Activated T-helper 2 cell treated with anti-CD3 and anti-CD28 coated beads, Interferon-gamma antibody, Interleukin-2, Interleukin-4, amounts not matched to agents 10 μg/mL and 5 μg/mL and 100 μg/mL, durations not matched to agents 14 hours and 24 hours and 36 hours (primary cell): ENCODE measurements at regions of chr1 and their contacts with region 1.

Region 1: GRCh38 chr1:160629286-160630210 is 17.3 kb downstream of the SLAMF1 start:
- DNase-seq: peak; percentile 73
- H3K4me3 Mint-ChIP-seq: peak overlapping the region; percentile 20
- H3K27ac Mint-ChIP-seq: peak overlapping the region; percentile 100
- H3K4me1 Mint-ChIP-seq: peaks cover 95% of the 10 kb centered on the region
- H3K27me3 Mint-ChIP-seq: no peaks in the 10 kb centered on the region

Region 2: DNA sequence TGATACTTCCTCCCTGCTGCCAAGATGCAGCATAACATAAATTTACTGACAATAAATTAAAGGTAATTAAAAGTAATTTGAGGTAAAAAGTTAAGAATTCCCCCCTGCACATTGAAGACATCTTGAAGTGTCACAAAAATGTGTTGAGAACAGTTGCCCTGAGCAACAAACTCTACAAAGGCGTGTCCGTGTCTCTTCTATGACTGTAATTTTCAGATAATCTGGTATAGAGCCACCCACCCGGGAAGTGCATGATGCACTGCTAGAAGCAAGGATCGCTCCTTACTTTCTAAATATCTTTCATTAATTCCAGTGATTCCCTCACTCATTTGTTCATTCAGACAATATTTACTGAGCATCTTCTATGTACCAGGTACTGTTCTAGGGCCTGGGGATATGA is 450.2 kb before region 1 on chr1:
- intact Hi-C with region 1: no loop called
- DNase-seq: no peak
- H3K4me3 Mint-ChIP-seq: no peak overlapping the region
- H3K27ac Mint-ChIP-seq: no peak overlapping the region
- H3K4me1 Mint-ChIP-seq: peaks cover 5% of the 10 kb centered on the region
- H3K27me3 Mint-ChIP-seq: peaks cover 19% of the 10 kb centered on the region

Region 3: DNA sequence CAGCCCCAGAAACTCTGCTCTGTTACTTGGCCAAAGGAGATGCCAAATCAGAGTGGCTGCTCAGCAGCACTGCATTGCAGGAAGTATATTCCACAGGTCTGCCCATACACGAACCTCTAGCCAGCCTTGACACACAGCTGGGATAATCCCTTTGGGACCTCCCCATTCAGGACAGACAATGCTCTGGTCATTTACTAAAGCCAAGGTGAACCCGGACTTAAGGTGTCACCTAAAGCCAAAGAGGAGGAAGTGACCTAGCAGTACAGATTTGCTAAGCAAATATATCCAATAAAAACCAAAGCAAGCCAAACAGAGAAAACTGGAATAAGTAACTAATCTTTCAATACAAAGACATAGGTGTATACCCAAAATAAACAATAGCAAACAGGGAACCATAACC is 314.2 kb before region 1 on chr1:
- intact Hi-C with region 1: no loop called
- DNase-seq: no peak
- H3K4me3 Mint-ChIP-seq: no peak overlapping the region
- H3K27ac Mint-ChIP-seq: no peak overlapping the region
- H3K4me1 Mint-ChIP-seq: peaks cover 15% of the 10 kb centered on the region
- H3K27me3 Mint-ChIP-seq: no peaks in the 10 kb centered on the region

Region 4: DNA sequence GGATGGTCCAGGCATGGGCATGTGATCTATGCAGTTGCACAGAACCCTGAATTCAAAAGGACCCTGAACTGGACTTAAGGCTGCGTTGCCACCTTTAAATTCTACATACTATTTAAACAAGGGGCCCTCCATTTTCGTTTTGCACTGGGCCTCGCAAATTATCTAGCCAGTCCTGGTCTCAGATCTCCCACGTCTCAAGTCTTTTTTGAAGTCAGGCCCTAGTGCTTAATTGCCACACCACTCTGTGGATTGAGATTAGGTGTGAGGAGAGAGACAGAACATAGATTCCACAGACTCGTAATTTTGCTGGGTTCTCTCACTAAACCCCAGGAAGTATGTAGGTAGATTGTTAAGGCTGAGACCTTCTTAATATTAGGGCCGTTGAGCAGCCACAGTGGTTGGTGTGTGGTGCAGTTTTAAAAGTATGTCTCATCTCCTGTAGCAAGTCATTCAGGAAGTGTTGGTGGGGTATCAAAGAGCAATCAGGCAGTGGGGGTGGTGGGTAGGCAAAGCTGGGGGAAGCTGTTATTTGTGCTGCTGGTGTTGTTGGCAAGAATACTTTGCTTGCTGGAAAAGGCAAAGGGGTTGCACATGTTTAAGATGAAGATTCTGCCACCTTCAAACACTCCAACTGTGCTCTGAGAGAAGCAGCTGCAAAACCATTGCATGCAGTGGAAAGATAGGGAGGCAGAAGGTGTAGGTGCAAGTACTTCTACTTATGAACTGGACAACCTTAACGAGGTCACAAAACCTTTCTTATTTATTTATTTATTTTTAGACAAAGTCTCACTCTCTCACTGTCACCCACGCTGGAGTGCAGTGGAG is 61.5 kb before region 1 on chr1:
- intact Hi-C with region 1: no loop called
- DNase-seq: peak; percentile 59
- H3K4me3 Mint-ChIP-seq: peak overlapping the region; percentile 76
- H3K27ac Mint-ChIP-seq: peak overlapping the region; percentile 98
- H3K4me1 Mint-ChIP-seq: peaks cover 72% of the 10 kb centered on the region
- H3K27me3 Mint-ChIP-seq: no peaks in the 10 kb centered on the region

Region 5: GRCh38 chr1:160711602-160712311 is 82.2 kb after region 1 on chr1 and contains the start of gene CD48:
- intact Hi-C with region 1: loop called (anchors 1 kb)
- DNase-seq: peak; percentile 56
- H3K4me3 Mint-ChIP-seq: no peak within 1 kb of the TSS
- H3K27ac Mint-ChIP-seq: no peak within 1 kb of the TSS
- H3K4me1 Mint-ChIP-seq: peaks cover 29% of the 10 kb centered on the region
- H3K27me3 Mint-ChIP-seq: no peaks in the 10 kb centered on the region
- total RNA-seq, gene CD48: 101 and 103 TPM in 2 replicates

Region 6: GRCh38 chr1:160874935-160875334 is 245.4 kb after region 1 on chr1:
- intact Hi-C with region 1: no loop called
- DNase-seq: no peak
- H3K4me3 Mint-ChIP-seq: no peak overlapping the region
- H3K27ac Mint-ChIP-seq: no peak overlapping the region
- H3K4me1 Mint-ChIP-seq: peaks cover 10% of the 10 kb centered on the region
- H3K27me3 Mint-ChIP-seq: peaks cover 5% of the 10 kb centered on the region